ENCODE measurements at regions of chr12 and their contacts with region 1.

Region 1: DNA sequence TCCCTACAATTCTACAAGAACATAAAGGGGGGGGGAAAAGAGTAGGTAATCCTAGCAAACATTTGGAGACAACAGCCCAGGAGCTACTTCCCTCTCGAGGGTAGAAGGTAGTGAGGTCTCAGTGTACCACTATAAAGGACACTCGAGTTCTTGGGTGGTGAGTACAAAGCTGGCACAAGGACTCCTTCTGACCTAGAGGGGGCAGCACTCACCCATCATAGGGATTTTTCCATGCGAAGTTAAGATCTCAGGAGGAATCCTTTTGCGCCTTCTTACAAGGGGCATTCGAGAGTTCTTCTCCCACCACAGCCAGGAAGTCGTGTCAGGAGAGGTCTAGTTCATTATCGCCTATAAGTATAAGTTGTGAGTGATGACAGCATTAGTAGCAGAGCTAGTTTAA is 200.2 kb upstream of the RBM19 start:
- DNase-seq: no peak
- H3K4me3 ChIP-seq: no peak overlapping the region
- H3K27ac ChIP-seq: no peak overlapping the region
- H3K4me1 ChIP-seq: no peaks in the 10 kb centered on the region
- H3K27me3 ChIP-seq: no peaks in the 10 kb centered on the region
- CTCF ChIP-seq: peak in 2 of 3 experiments; percentile 52 to 71

Region 2: DNA sequence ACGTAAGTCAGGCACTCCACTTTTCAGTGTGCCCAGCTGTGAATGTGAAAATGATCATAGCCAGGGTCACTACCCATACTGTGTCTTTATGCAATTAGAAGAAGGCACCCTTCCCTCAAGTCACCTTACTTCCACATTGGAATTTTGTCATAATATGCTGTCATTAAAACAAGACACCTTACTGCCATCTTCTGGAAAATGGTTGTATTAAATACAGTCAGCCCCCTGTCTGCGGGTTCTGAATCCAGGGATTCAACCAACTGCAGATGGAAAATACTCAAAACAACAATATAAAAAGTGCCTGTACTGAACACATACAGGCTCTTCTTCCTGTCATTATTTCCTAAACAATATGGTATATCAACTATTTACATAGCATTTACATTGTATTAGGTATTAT is 309.8 kb after region 1 on chr12:
- intact Hi-C with region 1: loop called (anchors 10 kb)
- DNase-seq: no peak
- H3K4me3 ChIP-seq: no peak overlapping the region
- H3K27ac ChIP-seq: no peak overlapping the region
- H3K4me1 ChIP-seq: peaks cover 0 to 13% of the 10 kb centered on the region in 2 donors
- H3K27me3 ChIP-seq: peaks cover 11% of the 10 kb centered on the region
- CTCF ChIP-seq: peak in 2 of 3 experiments; percentile 16 to 45